MCF 10A (cell line): ENCODE measurements at regions of chr2 and their contacts with region 1.

Region 1: GRCh38 chr2:98649135-98649991 is 41.0 kb downstream of the UNC50 start:
- DNase-seq: peak; percentile 80
- H3K4me3 Mint-ChIP-seq: no peak overlapping the region
- H3K27ac Mint-ChIP-seq: no peak overlapping the region
- H3K4me1 Mint-ChIP-seq: no peaks in the 10 kb centered on the region
- H3K27me3 Mint-ChIP-seq: no peaks in the 10 kb centered on the region
- CTCF ChIP-seq: peak; percentile 97

Region 2: GRCh38 chr2:98936353-98937351 is 287.3 kb after region 1 on chr2:
- CTCF ChIA-PET with region 1: interaction called, 5 read pairs
- POLR2A ChIA-PET with region 1: no interaction called
- intact Hi-C with region 1: loop called (anchors 5 kb)
- DNase-seq: peak; percentile 39
- H3K4me3 Mint-ChIP-seq: peak overlapping the region; percentile 72
- H3K27ac Mint-ChIP-seq: no peak overlapping the region
- H3K4me1 Mint-ChIP-seq: peaks cover 13% of the 10 kb centered on the region
- H3K27me3 Mint-ChIP-seq: no peaks in the 10 kb centered on the region
- CTCF ChIP-seq: peak; percentile 49